GM12878 (cell line): ENCODE measurements at regions of chr6 and their contacts with region 1.

Region 1: DNA sequence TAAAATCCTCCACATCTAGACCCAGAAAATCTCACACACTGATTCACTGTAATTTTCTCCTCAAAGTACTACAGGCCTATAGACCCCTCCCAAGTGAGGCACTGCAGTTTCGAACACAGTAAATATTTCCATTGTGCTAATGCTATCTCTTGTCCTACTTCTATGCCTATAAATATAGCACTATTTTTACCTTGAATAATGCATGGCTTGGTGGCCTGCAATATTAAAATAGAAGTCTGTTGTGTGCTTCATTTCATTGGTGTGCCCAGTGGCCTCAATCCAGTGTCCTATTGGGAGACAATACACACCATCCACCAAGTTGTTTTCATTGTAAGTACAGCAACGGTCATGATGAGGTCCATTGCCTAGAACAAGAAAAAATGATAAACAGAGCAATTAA is 49.4 kb downstream of the EPM2A start:
- DNase-seq: no peak
- ATAC-seq: no peak
- H3K4me3 ChIP-seq: no peak overlapping the region
- H3K27ac ChIP-seq: no peak overlapping the region
- H3K4me1 ChIP-seq: no peaks in the 10 kb centered on the region
- H3K27me3 ChIP-seq: no peaks in the 10 kb centered on the region
- CTCF ChIP-seq: no peak
- EP300 ChIP-seq: no peak
- POLR2A ChIP-seq: no peak
- RAD21 ChIP-seq: no peak

Region 2: GRCh38 chr6:145656128-145656527 is 29.8 kb before region 1 on chr6:
- CTCF ChIA-PET with region 1: no interaction called
- POLR2A ChIA-PET with region 1: no interaction called
- RAD21 ChIA-PET with region 1: no interaction called
- SMC1A ChIA-PET with region 1: no interaction called
- in situ Hi-C with region 1: no loop called
- intact Hi-C with region 1: no loop called
- DNase-seq: no peak
- ATAC-seq: no peak; the same call in 2 of the 3 replicates
- H3K4me3 ChIP-seq: no peak overlapping the region
- H3K27ac ChIP-seq: no peak overlapping the region
- H3K4me1 ChIP-seq: no peaks in the 10 kb centered on the region
- H3K27me3 ChIP-seq: no peaks in the 10 kb centered on the region
- CTCF ChIP-seq: no peak
- EP300 ChIP-seq: no peak
- POLR2A ChIP-seq: no peak
- RAD21 ChIP-seq: no peak

Region 3: DNA sequence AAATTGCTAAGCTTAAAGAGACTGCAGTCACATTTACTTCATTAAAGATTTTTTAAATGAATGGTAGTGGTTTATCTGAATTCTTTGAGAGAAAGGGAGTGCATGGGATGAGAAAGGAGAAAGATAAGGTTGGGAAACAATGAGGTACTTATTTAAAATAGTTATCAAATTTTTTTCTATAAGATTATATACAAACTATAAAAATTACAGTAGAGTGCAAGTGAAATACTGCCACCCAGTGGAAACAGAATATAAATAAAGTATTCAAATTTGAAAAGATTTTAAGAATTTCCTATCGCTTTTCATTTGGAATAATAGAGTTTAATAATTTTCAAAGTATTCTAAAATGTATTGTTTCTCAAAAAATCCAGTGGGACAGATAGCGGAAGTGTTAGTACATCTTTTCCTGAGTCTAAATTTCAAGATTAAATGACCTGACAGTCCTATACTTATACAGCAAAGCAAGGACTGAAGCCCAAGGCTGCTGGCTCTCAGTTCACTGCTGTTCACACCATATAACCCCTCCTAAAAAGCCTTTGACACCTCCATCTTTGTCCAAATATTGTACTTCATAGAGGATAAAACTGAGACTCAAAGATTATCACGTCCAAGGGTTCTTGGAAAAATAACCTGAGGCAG is 18.3 kb after region 1 on chr6:
- CTCF ChIA-PET with region 1: interaction called, 11 read pairs
- POLR2A ChIA-PET with region 1: no interaction called
- RAD21 ChIA-PET with region 1: no interaction called
- SMC1A ChIA-PET with region 1: interaction called, 4 read pairs
- in situ Hi-C with region 1: no loop called
- intact Hi-C with region 1: no loop called
- DNase-seq: no peak
- ATAC-seq: no peak
- H3K4me3 ChIP-seq: no peak overlapping the region
- H3K27ac ChIP-seq: no peak overlapping the region
- H3K4me1 ChIP-seq: no peaks in the 10 kb centered on the region
- H3K27me3 ChIP-seq: no peaks in the 10 kb centered on the region
- CTCF ChIP-seq: peak in 2 of 3 experiments; percentile 19 to 24; a peak in 3 of 6 replicates
- EP300 ChIP-seq: no peak
- POLR2A ChIP-seq: no peak
- RAD21 ChIP-seq: peak; percentile 14; the same call in 1 of the 2 replicates

Region 4: GRCh38 chr6:145866456-145867396 is 180.8 kb after region 1 on chr6:
- CTCF ChIA-PET with region 1: no interaction called
- POLR2A ChIA-PET with region 1: no interaction called
- RAD21 ChIA-PET with region 1: no interaction called
- SMC1A ChIA-PET with region 1: no interaction called
- in situ Hi-C with region 1: no loop called
- intact Hi-C with region 1: no loop called
- DNase-seq: no peak
- ATAC-seq: peak; percentile 57
- H3K4me3 ChIP-seq: peak overlapping the region; percentile 38
- H3K27ac ChIP-seq: peak overlapping the region; percentile 77
- H3K4me1 ChIP-seq: peaks cover 35% of the 10 kb centered on the region
- H3K27me3 ChIP-seq: no peaks in the 10 kb centered on the region
- CTCF ChIP-seq: no peak
- EP300 ChIP-seq: no peak
- POLR2A ChIP-seq: no peak
- RAD21 ChIP-seq: no peak